HCT116 (cell line): ENCODE measurements at regions of chr3 and their contacts with region 1.

Region 1: GRCh38 chr3:48739955-48740823 is 23.2 kb upstream of the IP6K2 start:
- DNase-seq: peak; percentile 59
- ATAC-seq: peak; percentile 100
- H3K4me3 ChIP-seq: no peak overlapping the region
- H3K27ac ChIP-seq: peak overlapping the region; percentile 26; the same call in 1 of the 2 replicates
- H3K4me1 ChIP-seq: peaks cover 11 to 12% of the 10 kb centered on the region in 2 experiments
- H3K27me3 ChIP-seq: no peaks in the 10 kb centered on the region
- CTCF ChIP-seq: peak; percentile 43 to 89 (median 82); a peak in 5 of 6 replicates
- POLR2A ChIP-seq: no peak
- RAD21 ChIP-seq: peak; percentile 60

Region 2: GRCh38 chr3:48697952-48698351 is 42.2 kb before region 1 on chr3:
- CTCF ChIA-PET with region 1: no interaction called
- POLR2A ChIA-PET with region 1: no interaction called
- RAD21 ChIA-PET with region 1: no interaction called
- intact Hi-C with region 1: no loop called
- DNase-seq: no peak
- ATAC-seq: no peak
- H3K4me3 ChIP-seq: no peak overlapping the region
- H3K27ac ChIP-seq: no peak overlapping the region; the same call in 1 of the 2 replicates
- H3K4me1 ChIP-seq: peaks cover 38 to 53% of the 10 kb centered on the region in 2 experiments
- H3K27me3 ChIP-seq: no peaks in the 10 kb centered on the region
- CTCF ChIP-seq: 0 out of 6 replicates have a peak, but pooled peaks of 1 of the 3 experiments have one; percentile 2
- POLR2A ChIP-seq: no peak
- RAD21 ChIP-seq: 0 out of 2 replicates have a peak, but pooled peaks have one; percentile 7

Region 3: DNA sequence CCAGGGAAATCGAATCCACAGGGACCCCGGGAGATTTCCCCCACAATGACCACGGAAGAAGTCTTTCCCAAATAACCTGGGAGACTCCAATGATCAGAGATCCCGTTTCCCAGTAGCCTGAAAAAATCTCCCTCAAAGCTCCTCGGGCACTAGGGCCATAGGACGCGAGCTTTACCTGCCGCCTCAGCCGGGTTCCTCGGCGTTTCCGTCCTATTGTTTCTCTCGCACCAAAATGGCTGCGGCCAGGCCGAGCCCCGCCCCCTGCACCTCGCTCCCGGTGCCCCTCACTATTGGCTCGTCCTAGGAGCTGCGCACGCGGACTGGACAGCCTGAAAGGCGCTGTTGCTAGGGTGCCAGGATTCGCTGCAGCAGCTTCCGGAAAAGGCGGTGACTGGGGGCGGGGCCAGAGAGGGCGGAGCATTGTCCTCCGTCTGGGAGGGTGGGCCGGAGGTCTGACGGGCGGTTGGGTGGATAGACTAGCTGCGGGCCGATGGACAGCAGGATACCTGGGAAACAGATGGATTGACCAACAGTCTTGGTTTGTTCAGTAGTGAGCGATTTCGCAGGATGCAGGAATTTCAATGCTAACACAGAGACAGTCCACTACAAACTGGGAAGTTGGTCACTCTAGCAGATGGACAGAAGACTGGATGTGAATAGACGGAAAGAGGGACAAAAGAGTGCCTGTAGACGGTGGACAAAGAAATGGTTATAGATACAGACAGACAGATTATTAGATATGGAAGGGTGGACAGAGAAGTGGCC is 23.0 kb before region 1 on chr3 and contains the start of gene IP6K2:
- CTCF ChIA-PET with region 1: interaction called, 12 read pairs
- POLR2A ChIA-PET with region 1: interaction called, 8 read pairs
- RAD21 ChIA-PET with region 1: interaction called in 1 of 2 experiments, 5 read pairs
- intact Hi-C with region 1: no loop called
- DNase-seq: peak; percentile 94
- ATAC-seq: peak; percentile 98
- H3K4me3 ChIP-seq: peak within 1 kb of the TSS; percentile 85 to 100
- H3K27ac ChIP-seq: peak within 1 kb of the TSS; percentile 74
- H3K4me1 ChIP-seq: peaks cover 12 to 18% of the 10 kb centered on the region in 2 experiments
- H3K27me3 ChIP-seq: no peaks in the 10 kb centered on the region
- CTCF ChIP-seq: no peak
- POLR2A ChIP-seq: peak; percentile 81
- RAD21 ChIP-seq: no peak
- total RNA-seq, gene IP6K2: 89.5 TPM

Region 4: DNA sequence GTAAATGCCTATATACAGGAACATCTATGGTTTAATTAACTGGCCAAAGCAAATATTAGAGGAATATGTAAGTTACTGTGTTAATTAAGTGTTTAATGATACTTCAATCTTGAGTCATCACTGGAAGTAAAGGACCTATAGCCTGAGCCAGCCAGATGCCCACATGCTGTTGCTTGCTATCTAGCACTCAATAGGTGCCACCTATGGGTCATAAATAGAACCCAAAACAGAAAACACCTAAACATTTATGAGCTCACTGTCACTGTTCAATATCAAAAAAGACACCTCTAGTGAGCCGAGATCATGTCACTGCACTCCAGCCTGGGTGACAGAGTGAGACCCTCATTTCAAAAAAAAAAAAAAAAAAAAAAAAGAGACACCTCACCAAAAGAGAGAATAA is 25.2 kb after region 1 on chr3:
- CTCF ChIA-PET with region 1: interaction called, 10 read pairs
- POLR2A ChIA-PET with region 1: no interaction called
- RAD21 ChIA-PET with region 1: interaction called in 1 of 2 experiments, 4 read pairs
- intact Hi-C with region 1: no loop called
- DNase-seq: no peak
- ATAC-seq: peak; percentile 67
- H3K4me3 ChIP-seq: no peak overlapping the region
- H3K27ac ChIP-seq: no peak overlapping the region
- H3K4me1 ChIP-seq: no peaks in the 10 kb centered on the region
- H3K27me3 ChIP-seq: no peaks in the 10 kb centered on the region
- CTCF ChIP-seq: peak; percentile 23 to 34 (median 30); a peak in 4 of 6 replicates
- POLR2A ChIP-seq: no peak
- RAD21 ChIP-seq: peak; percentile 46

Region 5: GRCh38 chr3:48952510-48953118 is 212.4 kb after region 1 on chr3:
- CTCF ChIA-PET with region 1: interaction called, 6 read pairs
- POLR2A ChIA-PET with region 1: no interaction called
- RAD21 ChIA-PET with region 1: no interaction called
- intact Hi-C with region 1: loop called (anchors 1 kb)
- DNase-seq: peak; percentile 41
- ATAC-seq: peak; percentile 93
- H3K4me3 ChIP-seq: no peak overlapping the region
- H3K27ac ChIP-seq: no peak overlapping the region
- H3K4me1 ChIP-seq: 0 out of 4 replicates have a peak, but pooled peaks cover 0 to 4% of the 10 kb centered on the region in 2 experiments
- H3K27me3 ChIP-seq: no peaks in the 10 kb centered on the region
- CTCF ChIP-seq: peak; percentile 61 to 76 (median 74); a peak in 5 of 6 replicates
- POLR2A ChIP-seq: no peak
- RAD21 ChIP-seq: peak; percentile 80